B cell (primary cell): ENCODE measurements at regions of chr19 and their contacts with region 1.

Region 1: GRCh38 chr19:43595999-43596841 is at the starts of genes IRGQ and ZNF576:
- DNase-seq: peak; percentile 100
- ATAC-seq: peak; percentile 88
- H3K4me3 ChIP-seq: peak within 1 kb of the TSS; percentile 61 to 88 (median 73)
- H3K4me3 Mint-ChIP-seq: peak within 1 kb of the TSS; percentile 98
- H3K27ac ChIP-seq: peak within 1 kb of the TSS; percentile 95 to 97
- H3K27ac Mint-ChIP-seq: peak within 1 kb of the TSS; percentile 99
- H3K4me1 ChIP-seq: peaks cover 16 to 38% of the 10 kb centered on the region in 2 donors
- H3K4me1 Mint-ChIP-seq: peaks cover 43% of the 10 kb centered on the region
- H3K27me3 ChIP-seq: no peaks in the 10 kb centered on the region
- H3K27me3 Mint-ChIP-seq: no peaks in the 10 kb centered on the region
- CTCF ChIP-seq: no peak
- total RNA-seq, gene IRGQ: 20.3 and 20.5 TPM in 2 replicates
- total RNA-seq, gene ZNF576: 17.3 and 23.2 TPM in 2 replicates

Region 2: GRCh38 chr19:43555185-43555770 is 40.9 kb before region 1 on chr19:
- CTCF ChIA-PET with region 1: interaction called, 126 read pairs
- POLR2A ChIA-PET with region 1: interaction called, 4 read pairs
- intact Hi-C with region 1: loop called (anchors 1 kb)
- DNase-seq: peak; percentile 83
- ATAC-seq: peak; percentile 94
- H3K4me3 ChIP-seq: no peak overlapping the region
- H3K4me3 Mint-ChIP-seq: no peak overlapping the region
- H3K27ac ChIP-seq: no peak overlapping the region
- H3K27ac Mint-ChIP-seq: peak overlapping the region; percentile 3
- H3K4me1 ChIP-seq: peaks cover under 1 to 10% of the 10 kb centered on the region in 2 donors
- H3K4me1 Mint-ChIP-seq: peaks cover 11% of the 10 kb centered on the region
- H3K27me3 ChIP-seq: no peaks in the 10 kb centered on the region
- H3K27me3 Mint-ChIP-seq: no peaks in the 10 kb centered on the region
- CTCF ChIP-seq: peak; percentile 83

Region 3: GRCh38 chr19:43575156-43575950 is 20.9 kb before region 1 on chr19 and contains the starts of genes PINLYP and XRCC1:
- CTCF ChIA-PET with region 1: interaction called, 21 read pairs
- POLR2A ChIA-PET with region 1: interaction called, 15 read pairs
- intact Hi-C with region 1: loop called (anchors 1 kb)
- DNase-seq: peak; percentile 99
- ATAC-seq: peak; percentile 99
- H3K4me3 ChIP-seq: peak within 1 kb of the TSS; percentile 67 to 98 (median 82)
- H3K4me3 Mint-ChIP-seq: peak within 1 kb of the TSS; percentile 97
- H3K27ac ChIP-seq: peak within 1 kb of the TSS; percentile 74 to 89
- H3K27ac Mint-ChIP-seq: peak within 1 kb of the TSS; percentile 92
- H3K4me1 ChIP-seq: peaks cover 16 to 29% of the 10 kb centered on the region in 2 donors
- H3K4me1 Mint-ChIP-seq: peaks cover 42% of the 10 kb centered on the region
- H3K27me3 ChIP-seq: no peaks in the 10 kb centered on the region
- H3K27me3 Mint-ChIP-seq: no peaks in the 10 kb centered on the region
- CTCF ChIP-seq: no peak
- total RNA-seq, gene PINLYP: 0.97 and 2.9 TPM in 2 replicates
- total RNA-seq, gene XRCC1: 38.2 and 47.4 TPM in 2 replicates

Region 4: DNA sequence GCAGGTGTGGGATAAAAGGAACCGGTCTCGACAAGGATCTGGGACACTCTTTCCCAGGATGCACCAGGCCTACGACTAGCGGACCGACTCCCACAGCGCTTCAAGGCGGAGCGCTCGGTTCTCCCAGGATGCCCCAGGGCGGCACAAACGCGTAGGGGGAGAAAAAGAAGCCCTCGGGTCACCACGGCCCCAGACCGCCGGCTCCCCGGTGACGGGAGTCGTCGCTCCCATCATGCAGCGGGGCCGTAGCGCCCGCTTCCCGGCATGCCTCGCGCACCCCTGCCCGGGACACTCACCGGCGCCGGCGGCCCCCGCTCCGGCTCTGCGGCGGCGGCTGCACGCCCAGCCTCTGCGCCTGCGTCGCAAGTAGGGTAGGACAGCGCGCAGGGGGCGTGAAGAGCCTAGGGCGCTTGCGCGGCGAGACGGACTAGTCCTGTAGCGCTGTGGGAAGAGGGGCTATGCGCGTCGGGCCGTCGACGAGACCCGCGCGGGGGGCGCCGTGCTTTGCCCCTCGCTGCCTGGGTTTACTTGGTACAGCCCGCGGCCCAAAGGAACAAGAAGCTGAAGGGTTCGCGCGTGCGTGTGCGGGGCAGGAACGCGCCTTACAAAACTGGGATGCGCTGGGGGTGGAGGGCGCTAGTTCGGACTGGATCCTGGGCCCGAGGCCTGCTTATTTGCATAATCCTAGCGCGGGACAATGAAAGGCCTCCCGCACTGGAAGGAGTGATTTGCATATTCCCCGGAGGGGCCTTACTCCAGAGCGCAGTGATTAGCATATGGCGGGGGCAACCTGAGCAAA is 23.2 kb after region 1 on chr19 and contains the start of gene ZNF428:
- CTCF ChIA-PET with region 1: interaction called, 5 read pairs
- POLR2A ChIA-PET with region 1: interaction called, 3 read pairs
- intact Hi-C with region 1: loop called (anchors 1 kb)
- DNase-seq: peak; percentile 92
- ATAC-seq: peak; percentile 86
- H3K4me3 ChIP-seq: peak within 1 kb of the TSS; percentile 54 to 86 (median 80)
- H3K4me3 Mint-ChIP-seq: peak within 1 kb of the TSS; percentile 98
- H3K27ac ChIP-seq: peak within 1 kb of the TSS; percentile 84 to 88
- H3K27ac Mint-ChIP-seq: peak within 1 kb of the TSS; percentile 99
- H3K4me1 ChIP-seq: peaks cover 14 to 15% of the 10 kb centered on the region in 2 donors
- H3K4me1 Mint-ChIP-seq: peaks cover 27% of the 10 kb centered on the region
- H3K27me3 ChIP-seq: no peaks in the 10 kb centered on the region
- H3K27me3 Mint-ChIP-seq: no peaks in the 10 kb centered on the region
- CTCF ChIP-seq: no peak
- total RNA-seq, gene ZNF428: 19.7 and 24.6 TPM in 2 replicates